PC-9 (cell line): ENCODE measurements at regions of chr6 and their contacts with region 1.

Region 1: DNA sequence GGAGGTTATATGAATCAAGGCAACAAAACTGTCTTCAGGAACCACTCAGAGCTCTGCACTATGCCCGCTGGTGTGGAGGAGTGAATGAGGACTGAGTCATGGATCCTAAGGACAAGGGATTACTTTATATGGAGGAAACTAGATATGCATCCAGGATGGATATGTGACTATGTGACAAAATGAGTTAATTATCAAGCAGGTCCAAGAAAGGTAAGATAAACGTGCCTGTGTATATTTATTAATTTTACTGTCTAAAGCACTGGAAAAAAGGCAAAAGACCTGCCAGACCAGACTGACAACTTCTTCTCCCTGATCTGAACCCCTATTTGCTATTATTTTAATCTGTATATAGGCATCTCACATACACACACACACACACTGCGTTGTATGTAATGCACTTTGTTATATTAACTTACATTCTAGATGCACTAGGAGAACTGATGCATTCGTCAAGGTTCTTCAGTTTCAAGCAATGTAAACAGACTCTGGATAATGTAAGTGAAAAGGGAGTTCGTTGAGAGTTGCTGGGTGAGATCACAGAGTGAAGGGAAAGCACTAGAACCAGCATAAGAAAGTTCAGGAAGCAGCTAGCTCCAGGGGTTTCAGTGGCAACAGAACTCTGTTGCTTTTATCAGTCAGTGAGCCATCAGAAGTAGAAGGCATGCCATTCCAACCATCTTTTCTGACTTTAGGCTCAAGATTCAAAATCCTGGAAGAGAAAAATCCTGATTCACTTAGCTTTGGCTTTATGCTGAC is 26.4 kb upstream of the ADGRG6 start:
- DNase-seq: no peak
- H3K4me3 ChIP-seq: no peak overlapping the region
- H3K27ac ChIP-seq: no peak overlapping the region
- H3K4me1 ChIP-seq: peaks cover 26% of the 10 kb centered on the region
- H3K27me3 ChIP-seq: no peaks in the 10 kb centered on the region
- CTCF ChIP-seq: no peak

Region 2: GRCh38 chr6:142207265-142207877 is 68.1 kb before region 1 on chr6:
- CTCF ChIA-PET with region 1: interaction called, 10 read pairs
- POLR2A ChIA-PET with region 1: no interaction called
- intact Hi-C with region 1: no loop called
- DNase-seq: peak in 1 of 2 experiments; percentile 11
- H3K4me3 ChIP-seq: no peak overlapping the region
- H3K27ac ChIP-seq: no peak overlapping the region
- H3K4me1 ChIP-seq: no peaks in the 10 kb centered on the region
- H3K27me3 ChIP-seq: no peaks in the 10 kb centered on the region
- CTCF ChIP-seq: peak; percentile 70